ENCODE measurements at regions of chr6 and their contacts with region 1.

Region 1: GRCh38 chr6:17156112-17156921 is 54.5 kb downstream of the STMND1 start:
- DNase-seq: peak; percentile 57 to 81 (median 62)
- ATAC-seq: peak; percentile 87
- H3K4me3 ChIP-seq: no peak overlapping the region
- H3K27ac ChIP-seq: no peak overlapping the region
- H3K4me1 ChIP-seq: no peaks in the 10 kb centered on the region
- H3K27me3 ChIP-seq: no peaks in the 10 kb centered on the region
- CTCF ChIP-seq: peak; percentile 55 to 86 (median 72); a peak in 5 of 6 replicates
- EP300 ChIP-seq: no peak
- POLR2A ChIP-seq: no peak
- RAD21 ChIP-seq: peak; percentile 96 to 97

Region 2: DNA sequence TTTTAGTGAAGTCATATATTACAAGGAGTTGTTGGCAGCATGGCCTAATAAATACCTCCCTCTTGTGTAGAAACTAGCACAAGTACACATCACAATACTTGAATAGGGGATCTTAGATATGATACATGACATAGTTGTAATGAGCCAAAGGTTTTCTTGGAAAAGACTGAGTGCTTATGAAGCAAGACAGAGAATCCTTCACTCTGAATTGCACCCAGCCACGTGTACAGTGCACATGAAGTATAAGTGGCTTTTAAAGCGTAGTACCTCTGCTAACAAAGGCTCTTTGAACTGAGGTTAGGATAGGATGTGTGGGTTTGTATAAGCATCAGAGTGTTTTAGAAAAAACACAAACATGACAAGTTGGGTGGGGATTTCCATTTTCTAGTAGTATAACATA is 200.0 kb before region 1 on chr6:
- CTCF ChIA-PET with region 1: no interaction called
- POLR2A ChIA-PET with region 1: no interaction called
- in situ Hi-C with region 1: no loop called
- intact Hi-C with region 1: no loop called
- DNase-seq: no peak
- ATAC-seq: no peak
- H3K4me3 ChIP-seq: no peak overlapping the region
- H3K27ac ChIP-seq: no peak overlapping the region
- H3K4me1 ChIP-seq: no peaks in the 10 kb centered on the region
- H3K27me3 ChIP-seq: no peaks in the 10 kb centered on the region
- CTCF ChIP-seq: no peak
- EP300 ChIP-seq: no peak
- POLR2A ChIP-seq: no peak
- RAD21 ChIP-seq: no peak; a peak in 1 of 4 replicates

Region 3: GRCh38 chr6:17318435-17319165 is 162.3 kb after region 1 on chr6:
- CTCF ChIA-PET with region 1: no interaction called
- POLR2A ChIA-PET with region 1: no interaction called
- in situ Hi-C with region 1: no loop called
- intact Hi-C with region 1: no loop called
- DNase-seq: no peak
- ATAC-seq: no peak
- H3K4me3 ChIP-seq: no peak overlapping the region
- H3K27ac ChIP-seq: no peak overlapping the region
- H3K4me1 ChIP-seq: no peaks in the 10 kb centered on the region
- H3K27me3 ChIP-seq: peaks cover 10 to 40% of the 10 kb centered on the region in 2 experiments; a peak in 4 of 5 replicates
- CTCF ChIP-seq: no peak
- EP300 ChIP-seq: no peak
- POLR2A ChIP-seq: no peak
- RAD21 ChIP-seq: no peak

Region 4: GRCh38 chr6:17589406-17590096 is 433.2 kb after region 1 on chr6:
- CTCF ChIA-PET with region 1: interaction called, 63 read pairs
- POLR2A ChIA-PET with region 1: interaction called, 3 read pairs
- in situ Hi-C with region 1: loop called (anchors 5 kb)
- intact Hi-C with region 1: loop called (anchors 1 kb)
- DNase-seq: no peak
- ATAC-seq: peak; percentile 64
- H3K4me3 ChIP-seq: no peak overlapping the region
- H3K27ac ChIP-seq: no peak overlapping the region
- H3K4me1 ChIP-seq: no peaks in the 10 kb centered on the region
- H3K27me3 ChIP-seq: no peaks in the 10 kb centered on the region
- CTCF ChIP-seq: peak; percentile 8 to 49 (median 20); a peak in 2 of 6 replicates
- EP300 ChIP-seq: no peak
- POLR2A ChIP-seq: no peak
- RAD21 ChIP-seq: peak in 1 of 2 experiments; percentile 76; a peak in 3 of 4 replicates

Region 5: GRCh38 chr6:17808609-17809008 is 652.3 kb after region 1 on chr6:
- CTCF ChIA-PET with region 1: no interaction called
- POLR2A ChIA-PET with region 1: no interaction called
- in situ Hi-C with region 1: loop called (anchors 5 kb)
- intact Hi-C with region 1: no loop called
- DNase-seq: no peak
- ATAC-seq: no peak
- H3K4me3 ChIP-seq: no peak overlapping the region
- H3K27ac ChIP-seq: no peak overlapping the region
- H3K4me1 ChIP-seq: no peaks in the 10 kb centered on the region
- H3K27me3 ChIP-seq: no peaks in the 10 kb centered on the region
- CTCF ChIP-seq: no peak
- EP300 ChIP-seq: no peak
- POLR2A ChIP-seq: no peak
- RAD21 ChIP-seq: no peak

Region 6: GRCh38 chr6:18323935-18324705 is 1167.8 kb after region 1 on chr6:
- CTCF ChIA-PET with region 1: no interaction called
- POLR2A ChIA-PET with region 1: no interaction called
- in situ Hi-C with region 1: loop called (anchors 25 kb)
- intact Hi-C with region 1: loop called (anchors 5 kb)
- DNase-seq: peak; percentile 42 to 60 (median 56)
- ATAC-seq: peak; percentile 82
- H3K4me3 ChIP-seq: no peak overlapping the region
- H3K27ac ChIP-seq: no peak overlapping the region
- H3K4me1 ChIP-seq: no peaks in the 10 kb centered on the region
- H3K27me3 ChIP-seq: peaks cover 5 to 10% of the 10 kb centered on the region in 2 experiments; a peak in 2 of 5 replicates
- CTCF ChIP-seq: peak; percentile 60 to 85 (median 79); a peak in 5 of 6 replicates
- EP300 ChIP-seq: no peak
- POLR2A ChIP-seq: no peak
- RAD21 ChIP-seq: peak; percentile 79 to 87